Left cardiac atrium (tissue), 4 donors: ENCODE measurements at regions of chr11 and their contacts with region 1.

Region 1: DNA sequence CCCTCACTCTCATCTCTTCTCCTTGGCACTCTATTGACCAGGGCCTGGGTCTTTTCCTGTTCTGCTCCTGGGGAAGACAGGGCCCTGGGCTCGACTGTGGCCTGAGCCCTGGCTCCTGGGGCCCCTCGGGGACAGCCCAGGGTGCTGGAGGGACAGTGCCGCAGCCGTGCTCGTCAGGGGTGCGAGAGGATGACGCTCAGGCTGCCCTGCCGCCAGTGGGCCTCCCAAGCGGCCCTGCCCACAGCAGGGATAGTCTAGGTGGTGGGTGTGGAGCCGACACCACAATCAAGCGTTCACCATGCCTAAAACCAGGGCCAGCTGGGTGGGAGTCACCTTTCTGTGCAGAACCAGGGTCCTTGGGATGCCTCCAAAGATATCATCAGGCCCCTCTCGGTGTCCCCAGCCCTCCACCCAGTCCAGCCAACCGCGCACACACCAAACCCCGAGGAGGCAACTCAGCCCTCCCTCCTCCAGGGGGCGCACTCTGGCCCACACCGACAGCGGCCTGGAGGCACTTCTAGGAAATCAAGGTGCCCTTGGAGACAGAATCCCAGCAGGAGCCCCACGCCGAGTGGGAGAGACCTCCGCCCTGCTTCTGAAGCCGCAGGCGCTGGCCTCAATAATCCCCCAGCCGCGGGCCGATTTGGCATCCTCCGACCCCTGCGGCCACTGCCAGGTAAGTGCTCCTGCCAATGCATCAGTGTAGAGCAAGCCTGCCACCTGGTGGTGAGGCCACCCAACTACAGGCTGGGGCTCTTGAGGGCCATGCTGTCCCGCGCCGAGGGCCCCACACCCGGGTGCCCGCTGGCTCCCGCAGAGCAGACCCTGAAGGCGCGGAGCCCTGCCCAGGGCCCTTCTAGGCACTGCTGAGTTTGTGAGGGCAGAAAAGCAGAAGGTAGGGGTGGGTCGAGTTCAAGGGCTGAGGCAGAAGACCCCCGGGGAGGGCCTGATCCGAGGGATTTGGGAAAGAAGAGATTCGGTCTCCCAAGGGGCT is 496.4 kb downstream of the BUD13 start:
- DNase-seq: peak; percentile 80
- ATAC-seq: peak; percentile 88 to 93

Region 2: DNA sequence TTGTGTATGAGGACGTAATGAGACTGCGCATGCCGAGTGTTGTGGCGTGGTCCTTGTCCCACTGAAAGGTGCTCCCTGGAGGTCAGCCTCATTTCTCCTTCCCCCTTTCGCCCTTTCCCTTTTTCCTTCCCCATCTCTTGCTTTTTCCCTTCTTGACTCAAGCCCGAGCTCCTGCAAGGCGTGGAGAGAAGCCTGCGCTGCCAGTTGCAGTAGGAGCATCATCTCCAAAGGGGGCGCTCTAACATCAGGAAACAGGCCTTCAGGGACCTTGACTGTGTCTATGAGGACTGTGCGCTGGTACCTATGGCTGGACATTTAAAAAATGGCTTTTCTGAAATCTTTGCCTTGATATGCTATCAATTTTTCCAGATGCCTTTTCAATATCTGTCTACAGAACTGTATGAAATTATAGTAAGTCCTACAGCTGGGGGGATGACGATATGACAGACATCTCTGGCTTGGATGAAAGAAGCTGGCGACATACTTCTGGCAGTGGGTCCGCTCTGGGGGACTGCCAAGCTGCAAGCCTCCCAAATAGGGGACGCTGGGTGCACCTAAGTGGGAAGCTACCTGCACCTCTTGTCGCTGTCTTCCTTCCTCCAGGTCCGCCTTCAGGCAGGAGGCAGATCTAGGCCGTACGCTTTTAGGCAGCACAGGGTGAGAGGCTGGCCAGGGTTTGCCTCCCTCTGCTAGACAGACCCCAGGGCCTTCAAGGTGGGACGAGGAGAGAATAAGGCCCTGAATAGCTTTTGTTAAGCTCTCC is 1501.6 kb before region 1 on chr11:
- intact Hi-C with region 1: loop called in 1 of 2 experiments (anchors 5 kb)
- DNase-seq: peak; percentile 30
- ATAC-seq: peak; percentile 65 to 70

Region 3: GRCh38 chr11:115324581-115325432 is 951.5 kb before region 1 on chr11:
- intact Hi-C with region 1: loop called (anchors 2 to 10 kb)
- DNase-seq: no peak
- ATAC-seq: peak; percentile 83 to 88

Region 4: GRCh38 chr11:115334932-115335788 is 941.2 kb before region 1 on chr11:
- intact Hi-C with region 1: loop called in 1 of 2 experiments (anchors 10 kb)
- DNase-seq: no peak
- ATAC-seq: no peak

Region 5: GRCh38 chr11:115990004-115990447 is 286.3 kb before region 1 on chr11:
- intact Hi-C with region 1: loop called in 1 of 2 experiments (anchors 10 kb)
- DNase-seq: peak; percentile 28
- ATAC-seq: peak in 1 of 2 donors; percentile 81

Region 6: DNA sequence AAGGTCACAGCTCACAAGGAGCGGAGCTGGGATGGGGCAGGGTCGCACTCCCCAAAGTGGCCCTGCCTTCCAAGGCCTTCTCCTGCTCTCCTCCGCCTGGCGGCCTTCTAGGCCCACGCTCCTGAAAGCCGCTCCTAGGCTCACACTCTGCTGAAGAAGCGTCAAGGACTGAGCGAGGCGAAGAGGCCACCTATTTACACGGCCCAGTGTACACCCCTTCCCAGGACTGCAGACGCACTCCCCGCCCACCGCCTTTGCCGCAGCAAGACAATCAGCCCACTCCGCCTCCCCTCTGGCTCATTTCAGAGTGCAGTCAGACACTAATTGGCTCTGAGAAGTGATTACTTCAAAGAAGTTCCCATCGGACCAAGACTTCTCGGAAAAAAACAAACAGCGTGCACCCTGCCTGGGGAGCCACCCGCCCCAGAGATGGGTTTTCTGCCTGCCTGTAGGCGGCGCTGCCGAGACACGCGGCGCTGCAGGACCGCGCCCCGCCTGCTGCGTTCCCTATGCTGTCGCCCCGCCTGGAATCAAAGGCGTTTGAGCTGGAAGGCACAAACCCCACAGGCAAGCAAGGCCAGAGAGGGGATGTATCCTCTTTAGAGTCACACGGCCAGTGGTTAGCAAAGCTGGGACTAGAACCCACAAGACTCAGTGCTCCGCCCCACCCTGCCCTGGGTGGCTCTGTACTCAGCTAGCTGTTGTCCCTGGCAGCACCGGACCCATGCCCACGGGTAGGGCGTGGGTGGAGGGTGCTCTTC is 81.6 kb after region 1 on chr11:
- intact Hi-C with region 1: no loop called
- DNase-seq: no peak
- ATAC-seq: peak in 1 of 2 donors; percentile 35